Activated CD4-positive, alpha-beta T cell treated with anti-CD3 and anti-CD28 coated beads, Interleukin-2, amount 10 ng/mL, durations not matched to agents 24 days and 14 days (primary cell): ENCODE measurements at regions of chr7 and their contacts with region 1.

Region 1: GRCh38 chr7:23967949-23968599 is 258.1 kb downstream of the STK31 start:
- DNase-seq: peak; percentile 58
- H3K4me3 Mint-ChIP-seq: no peak overlapping the region
- H3K27ac Mint-ChIP-seq: peak overlapping the region; percentile 71
- H3K4me1 Mint-ChIP-seq: peaks cover 9% of the 10 kb centered on the region
- H3K27me3 Mint-ChIP-seq: no peaks in the 10 kb centered on the region

Region 2: GRCh38 chr7:23893942-23894891 is 73.9 kb before region 1 on chr7:
- intact Hi-C with region 1: loop called (anchors 2 kb)
- DNase-seq: peak; percentile 83
- H3K4me3 Mint-ChIP-seq: peak overlapping the region; percentile 69
- H3K27ac Mint-ChIP-seq: peak overlapping the region; percentile 88
- H3K4me1 Mint-ChIP-seq: peaks cover 29% of the 10 kb centered on the region
- H3K27me3 Mint-ChIP-seq: peaks cover 16% of the 10 kb centered on the region

Region 3: DNA sequence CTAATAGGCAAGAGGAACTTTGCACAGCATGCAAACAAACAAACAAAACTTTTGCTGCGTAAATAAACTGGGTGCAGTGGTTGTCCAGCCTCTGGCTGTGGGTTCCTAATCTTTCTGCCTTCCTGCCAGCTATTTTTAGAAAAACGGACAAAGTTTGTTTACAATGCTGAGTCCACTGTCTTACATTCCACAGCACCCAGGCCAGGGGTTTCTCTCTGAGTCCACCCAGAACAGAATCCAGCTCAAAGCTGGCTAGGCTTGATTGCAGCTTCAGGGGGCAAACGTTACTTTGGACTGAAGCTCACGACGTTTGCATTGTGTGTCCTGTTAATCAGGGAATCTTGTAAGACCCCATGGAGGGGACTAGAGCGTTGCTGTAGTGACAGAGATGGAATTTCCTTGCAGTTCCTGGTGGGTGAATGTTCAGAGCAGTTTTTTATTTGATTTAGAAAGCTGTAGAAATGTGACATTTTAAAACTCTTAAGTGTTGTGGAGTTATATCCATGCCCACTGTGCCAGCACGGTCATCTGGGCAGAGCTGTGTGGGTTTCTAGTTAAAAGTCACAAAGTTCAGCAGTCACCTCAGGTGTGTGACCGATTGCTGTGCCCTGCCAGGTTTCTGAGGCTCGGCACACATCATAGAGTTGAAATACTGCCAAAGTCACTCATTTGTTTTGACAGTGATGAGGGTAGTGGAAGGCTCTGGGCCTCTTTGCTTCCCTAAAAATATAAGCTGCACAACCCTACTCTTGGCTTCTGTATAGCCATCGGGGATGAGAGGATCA is 11.1 kb before region 1 on chr7:
- intact Hi-C with region 1: no loop called
- DNase-seq: no peak
- H3K4me3 Mint-ChIP-seq: no peak overlapping the region
- H3K27ac Mint-ChIP-seq: no peak overlapping the region
- H3K4me1 Mint-ChIP-seq: no peaks in the 10 kb centered on the region
- H3K27me3 Mint-ChIP-seq: peaks cover 2% of the 10 kb centered on the region

Region 4: DNA sequence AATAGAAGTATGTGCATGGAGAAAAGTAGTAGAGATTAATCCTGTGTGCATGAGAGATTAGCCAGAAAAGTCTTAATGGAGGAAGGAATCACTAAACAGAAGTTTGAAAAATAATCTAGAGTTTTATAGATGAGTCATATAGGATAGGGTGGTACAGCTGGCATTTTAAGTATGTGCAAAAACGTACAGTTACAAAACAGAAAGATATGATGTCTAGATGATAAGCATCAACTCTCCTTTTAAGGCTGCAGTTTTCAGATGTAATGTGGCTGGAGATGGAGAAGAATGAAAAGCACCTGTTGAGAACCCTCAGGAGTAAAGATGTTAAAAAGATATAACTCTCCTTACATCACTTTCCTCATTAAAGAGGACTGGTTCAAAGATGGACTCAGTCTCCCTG is 13.2 kb after region 1 on chr7:
- intact Hi-C with region 1: no loop called
- DNase-seq: no peak
- H3K4me3 Mint-ChIP-seq: no peak overlapping the region
- H3K27ac Mint-ChIP-seq: no peak overlapping the region
- H3K4me1 Mint-ChIP-seq: no peaks in the 10 kb centered on the region
- H3K27me3 Mint-ChIP-seq: peaks cover 2% of the 10 kb centered on the region